ENCODE measurements at regions of chr3 and their contacts with region 1.

Region 1: GRCh38 chr3:170307671-170308403 is 49.7 kb upstream of the SKIL start:
- DNase-seq: no peak
- CTCF ChIP-seq: no peak

Region 2: GRCh38 chr3:169085827-169086226 is 1222.0 kb before region 1 on chr3:
- in situ Hi-C with region 1: no loop called
- DNase-seq: no peak
- CTCF ChIP-seq: no peak

Region 3: DNA sequence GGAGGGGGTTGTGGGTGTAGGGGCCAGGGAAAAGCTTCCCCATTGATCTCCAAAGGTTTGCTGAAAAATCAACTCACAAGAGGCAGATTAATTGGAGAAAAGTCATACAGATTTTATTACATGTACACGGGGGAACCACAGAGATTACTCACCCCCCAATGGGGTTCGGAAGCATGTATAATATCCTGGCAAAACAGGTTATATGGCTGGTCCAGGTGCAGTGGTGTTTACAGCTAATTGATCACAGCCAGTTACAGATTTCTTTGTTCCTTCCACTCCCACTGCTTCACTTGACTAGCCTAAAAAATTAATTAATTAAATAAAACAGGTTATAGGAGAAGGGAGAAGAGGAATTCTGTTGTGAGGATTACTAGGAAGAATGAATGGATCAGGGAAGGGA is 63.3 kb before region 1 on chr3:
- in situ Hi-C with region 1: no loop called
- DNase-seq: no peak
- CTCF ChIP-seq: no peak

Region 4: GRCh38 chr3:170414202-170414663 is 106.4 kb after region 1 on chr3:
- in situ Hi-C with region 1: loop called (anchors 25 kb)
- DNase-seq: peak; percentile 71
- CTCF ChIP-seq: peak; percentile 88

Region 5: GRCh38 chr3:170689893-170690660 is 382.2 kb after region 1 on chr3:
- in situ Hi-C with region 1: loop called (anchors 25 kb)
- DNase-seq: peak; percentile 41
- CTCF ChIP-seq: peak; percentile 90

Region 6: DNA sequence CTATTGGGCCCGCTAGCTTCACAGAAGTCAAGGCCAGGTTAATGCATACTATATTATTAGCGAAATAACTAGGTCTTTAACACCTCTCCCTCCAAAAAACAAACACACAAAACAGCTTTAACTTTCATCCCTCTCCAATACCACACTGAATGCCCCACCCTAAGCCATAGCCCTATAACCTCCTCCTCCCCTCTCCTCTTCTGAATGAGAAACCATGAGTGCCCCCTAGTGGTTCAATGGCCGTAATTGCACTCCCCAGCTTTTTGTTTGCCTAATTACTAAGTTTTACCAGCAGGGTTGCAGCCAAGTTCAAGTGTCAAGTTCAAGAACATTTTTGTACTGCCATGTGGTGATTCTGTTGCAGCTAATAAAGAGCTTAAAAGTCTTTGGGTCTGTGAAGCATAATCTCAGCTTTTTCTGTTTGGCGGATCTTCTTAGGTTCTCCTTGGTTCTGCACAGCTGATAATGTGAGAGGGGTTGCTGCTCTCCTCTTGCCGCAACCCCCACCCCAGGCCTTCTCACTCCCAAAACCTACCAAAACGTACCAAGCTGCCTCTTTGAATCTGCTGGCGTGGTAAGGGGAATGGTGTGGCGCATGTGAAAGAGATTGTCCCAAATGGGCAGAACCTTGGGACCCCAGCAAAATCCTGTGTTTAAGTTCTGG is 504.2 kb after region 1 on chr3:
- in situ Hi-C with region 1: loop called (anchors 25 kb)
- DNase-seq: peak; percentile 73
- CTCF ChIP-seq: peak; percentile 86

Measured in GM13977 (cell line).